Activated naive CD4-positive, alpha-beta T cell treated with anti-CD3 and anti-CD28 coated beads for 36 hours (primary cell): ENCODE measurements at regions of chr17 and their contacts with region 1.

Region 1: GRCh38 chr17:45148183-45149036 is at the start of gene HEXIM1:
- DNase-seq: peak; percentile 99
- H3K4me3 Mint-ChIP-seq: peak within 1 kb of the TSS; percentile 97
- H3K27ac Mint-ChIP-seq: peak within 1 kb of the TSS; percentile 100
- H3K4me1 Mint-ChIP-seq: peaks cover 42% of the 10 kb centered on the region
- H3K27me3 Mint-ChIP-seq: no peaks in the 10 kb centered on the region
- total RNA-seq, gene HEXIM1: 24.3 to 24.7 TPM

Region 2: GRCh38 chr17:45161019-45161825 is 12.8 kb after region 1 on chr17:
- CTCF ChIA-PET with region 1: interaction called, 93 read pairs
- intact Hi-C with region 1: loop called (anchors 1 kb)
- DNase-seq: peak; percentile 99
- H3K4me3 Mint-ChIP-seq: peak overlapping the region; percentile 96
- H3K27ac Mint-ChIP-seq: peak overlapping the region; percentile 96
- H3K4me1 Mint-ChIP-seq: peaks cover 33% of the 10 kb centered on the region
- H3K27me3 Mint-ChIP-seq: no peaks in the 10 kb centered on the region

Region 3: GRCh38 chr17:45197555-45198334 is 49.3 kb after region 1 on chr17:
- CTCF ChIA-PET with region 1: interaction called, 82 read pairs
- intact Hi-C with region 1: no loop called
- DNase-seq: peak; percentile 94
- H3K4me3 Mint-ChIP-seq: no peak overlapping the region
- H3K27ac Mint-ChIP-seq: no peak overlapping the region
- H3K4me1 Mint-ChIP-seq: peaks cover 3% of the 10 kb centered on the region
- H3K27me3 Mint-ChIP-seq: no peaks in the 10 kb centered on the region

Region 4: GRCh38 chr17:45247429-45248131 is 99.2 kb after region 1 on chr17:
- CTCF ChIA-PET with region 1: interaction called, 3 read pairs
- intact Hi-C with region 1: loop called (anchors 1 kb)
- DNase-seq: peak; percentile 99
- H3K4me3 Mint-ChIP-seq: peak overlapping the region; percentile 81
- H3K27ac Mint-ChIP-seq: peak overlapping the region; percentile 86
- H3K4me1 Mint-ChIP-seq: peaks cover 54% of the 10 kb centered on the region
- H3K27me3 Mint-ChIP-seq: no peaks in the 10 kb centered on the region